HCT116 (cell line): ENCODE measurements at regions of chr1 and their contacts with region 1.

Region 1: DNA sequence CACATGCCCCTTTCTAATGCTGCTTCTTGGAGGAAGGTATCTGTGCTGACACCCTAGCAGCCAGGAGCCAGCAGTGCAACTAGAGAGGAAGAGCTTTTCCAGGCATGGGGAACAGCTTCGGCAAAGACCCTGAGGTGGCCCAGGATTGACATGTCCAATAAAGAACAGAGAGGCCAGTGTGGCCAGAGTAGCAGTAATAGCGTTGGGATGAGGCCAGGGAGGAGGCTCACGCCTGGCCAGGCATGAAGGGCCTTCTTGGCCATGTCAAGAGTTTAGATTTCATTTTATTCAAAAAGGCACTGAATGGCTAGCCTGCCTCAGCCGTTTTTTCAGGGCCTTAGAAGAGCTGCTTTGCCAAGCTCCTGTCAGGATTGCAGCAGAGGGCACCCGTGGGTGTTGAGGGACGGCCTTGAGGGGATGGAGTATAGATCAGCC is 16.3 kb upstream of the ADAMTSL4 start:
- DNase-seq: no peak
- ATAC-seq: 0 out of 2 replicates have a peak, but pooled peaks have one; percentile 6
- H3K4me3 ChIP-seq: no peak overlapping the region
- H3K27ac ChIP-seq: no peak overlapping the region
- H3K4me1 ChIP-seq: peaks cover 6 to 35% of the 10 kb centered on the region in 2 experiments; a peak in 3 of 4 replicates
- H3K27me3 ChIP-seq: no peaks in the 10 kb centered on the region
- CTCF ChIP-seq: no peak; a peak in 1 of 6 replicates
- POLR2A ChIP-seq: no peak
- RAD21 ChIP-seq: no peak

Region 2: DNA sequence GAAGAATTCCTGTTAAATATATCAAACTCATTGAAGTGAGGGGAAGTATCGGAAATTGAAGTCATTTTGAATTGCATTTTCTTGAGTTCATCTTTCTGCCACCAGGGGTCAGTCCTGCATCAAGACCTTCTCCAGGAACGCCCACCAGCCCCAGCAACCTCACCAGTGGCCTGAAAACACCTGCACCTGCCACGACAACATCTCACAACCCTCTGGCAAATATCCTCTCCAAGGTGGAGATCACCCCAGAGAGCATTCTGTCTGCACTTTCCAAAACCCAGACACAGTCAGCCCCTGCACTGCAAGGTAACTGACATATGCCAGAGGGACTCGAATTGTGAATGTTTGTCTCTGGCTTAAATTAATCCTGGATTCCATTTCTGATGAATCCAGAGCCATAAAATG is 68.5 kb before region 1 on chr1:
- CTCF ChIA-PET with region 1: no interaction called
- POLR2A ChIA-PET with region 1: no interaction called
- RAD21 ChIA-PET with region 1: no interaction called
- intact Hi-C with region 1: loop called (anchors 1 kb)
- DNase-seq: peak; percentile 41
- ATAC-seq: peak; percentile 81
- H3K4me3 ChIP-seq: no peak overlapping the region
- H3K27ac ChIP-seq: no peak overlapping the region
- H3K4me1 ChIP-seq: no peaks in the 10 kb centered on the region
- H3K27me3 ChIP-seq: no peaks in the 10 kb centered on the region
- CTCF ChIP-seq: peak; percentile 64 to 79 (median 67)
- POLR2A ChIP-seq: no peak
- RAD21 ChIP-seq: peak; percentile 83

Region 3: DNA sequence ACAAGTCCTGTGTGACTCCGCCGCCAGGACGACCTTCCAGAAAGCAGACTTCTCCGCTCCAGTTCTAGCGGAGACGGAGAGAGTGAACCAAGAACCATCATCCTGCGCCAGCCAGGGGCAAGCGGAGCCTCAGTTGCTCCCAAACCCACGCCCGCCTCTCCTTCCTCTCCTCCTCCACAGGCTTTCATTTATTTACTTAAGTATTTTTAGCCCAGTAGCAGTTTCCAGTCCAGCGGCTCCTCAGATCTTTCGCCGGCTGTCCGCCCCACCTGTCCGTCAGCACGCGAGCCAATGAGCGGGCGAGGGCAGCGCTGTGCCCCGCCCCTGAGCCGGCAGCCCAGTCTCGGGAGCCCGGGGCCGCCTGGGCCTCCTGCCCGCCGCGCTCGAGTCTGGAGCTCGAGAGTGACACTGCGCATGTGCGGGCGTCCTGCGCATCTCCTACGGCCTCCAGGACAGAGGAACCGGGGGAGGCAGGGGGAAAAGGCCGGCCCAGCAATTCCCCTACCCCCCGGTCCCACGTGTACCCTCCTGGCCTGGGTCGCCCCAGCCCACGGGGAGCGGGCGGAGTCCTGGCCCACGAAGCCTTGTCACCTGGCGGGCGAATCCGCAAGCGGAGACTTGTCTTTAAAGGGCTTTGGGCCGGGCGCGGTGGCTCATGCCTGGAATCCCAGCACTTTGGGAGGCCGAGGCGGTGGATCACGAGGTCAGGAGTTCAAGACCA is 17.4 kb before region 1 on chr1 and contains the start of gene FALEC:
- CTCF ChIA-PET with region 1: interaction called, 19 read pairs
- POLR2A ChIA-PET with region 1: interaction called, 5 read pairs
- RAD21 ChIA-PET with region 1: no interaction called
- intact Hi-C with region 1: no loop called
- DNase-seq: peak; percentile 87
- ATAC-seq: peak; percentile 98
- H3K4me3 ChIP-seq: peak within 1 kb of the TSS; percentile 63 to 67
- H3K27ac ChIP-seq: peak within 1 kb of the TSS; percentile 56
- H3K4me1 ChIP-seq: peaks cover 10 to 23% of the 10 kb centered on the region in 2 experiments
- H3K27me3 ChIP-seq: no peaks in the 10 kb centered on the region
- CTCF ChIP-seq: no peak
- POLR2A ChIP-seq: peak; percentile 45
- RAD21 ChIP-seq: no peak
- total RNA-seq, gene FALEC: 0.59 TPM

Region 4: DNA sequence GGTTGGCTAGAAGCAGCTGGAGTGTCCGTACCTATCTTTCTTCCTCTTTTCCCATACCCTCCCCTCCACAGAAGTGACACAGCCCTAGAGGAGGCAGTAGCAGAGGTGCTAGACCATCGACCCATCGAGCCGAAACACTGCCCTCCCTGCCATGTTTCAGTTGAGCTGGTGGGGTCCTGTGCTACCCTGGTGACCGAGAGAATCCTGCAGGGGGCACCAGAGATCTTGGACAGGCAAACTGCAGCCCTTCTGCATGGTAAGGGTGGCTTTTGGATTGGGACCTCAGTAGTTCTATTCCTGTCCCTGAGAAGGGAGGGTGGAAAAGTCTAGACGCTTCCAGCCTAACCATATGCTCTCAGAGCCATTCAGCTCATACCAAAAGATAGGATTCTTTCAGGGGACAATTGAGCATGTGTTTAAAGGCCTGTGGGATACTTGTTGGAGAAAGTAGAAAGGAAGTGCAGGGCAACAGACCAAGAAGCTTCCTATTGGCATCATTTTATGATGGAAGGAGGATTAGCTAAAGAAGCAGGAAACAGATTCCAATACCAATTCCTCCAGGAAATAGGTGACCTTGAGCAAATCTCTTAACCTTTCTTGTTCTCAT is 491.8 kb after region 1 on chr1:
- CTCF ChIA-PET with region 1: no interaction called
- POLR2A ChIA-PET with region 1: no interaction called
- RAD21 ChIA-PET with region 1: no interaction called
- intact Hi-C with region 1: no loop called
- DNase-seq: peak; percentile 46
- ATAC-seq: peak; percentile 99
- H3K4me3 ChIP-seq: no peak overlapping the region
- H3K27ac ChIP-seq: no peak overlapping the region
- H3K4me1 ChIP-seq: no peaks in the 10 kb centered on the region
- H3K27me3 ChIP-seq: no peaks in the 10 kb centered on the region
- CTCF ChIP-seq: peak; percentile 67 to 75 (median 74)
- POLR2A ChIP-seq: no peak
- RAD21 ChIP-seq: peak; percentile 81